OCI-LY7 (cell line): ENCODE measurements at regions of chr3 and their contacts with region 1.

Region 1: GRCh38 chr3:101809178-101810021 is 30.4 kb downstream of the NXPE3 start:
- DNase-seq: peak; percentile 65
- H3K4me3 ChIP-seq: no peak overlapping the region
- H3K27ac ChIP-seq: no peak overlapping the region
- H3K4me1 ChIP-seq: peaks cover 20% of the 10 kb centered on the region
- CTCF ChIP-seq: peak; percentile 94

Region 2: GRCh38 chr3:101665851-101666250 is 143.5 kb before region 1 on chr3:
- CTCF ChIA-PET with region 1: no interaction called
- POLR2A ChIA-PET with region 1: no interaction called
- intact Hi-C with region 1: no loop called
- DNase-seq: no peak
- H3K4me3 ChIP-seq: no peak overlapping the region
- H3K27ac ChIP-seq: no peak overlapping the region
- H3K4me1 ChIP-seq: no peaks in the 10 kb centered on the region
- CTCF ChIP-seq: no peak

Region 3: DNA sequence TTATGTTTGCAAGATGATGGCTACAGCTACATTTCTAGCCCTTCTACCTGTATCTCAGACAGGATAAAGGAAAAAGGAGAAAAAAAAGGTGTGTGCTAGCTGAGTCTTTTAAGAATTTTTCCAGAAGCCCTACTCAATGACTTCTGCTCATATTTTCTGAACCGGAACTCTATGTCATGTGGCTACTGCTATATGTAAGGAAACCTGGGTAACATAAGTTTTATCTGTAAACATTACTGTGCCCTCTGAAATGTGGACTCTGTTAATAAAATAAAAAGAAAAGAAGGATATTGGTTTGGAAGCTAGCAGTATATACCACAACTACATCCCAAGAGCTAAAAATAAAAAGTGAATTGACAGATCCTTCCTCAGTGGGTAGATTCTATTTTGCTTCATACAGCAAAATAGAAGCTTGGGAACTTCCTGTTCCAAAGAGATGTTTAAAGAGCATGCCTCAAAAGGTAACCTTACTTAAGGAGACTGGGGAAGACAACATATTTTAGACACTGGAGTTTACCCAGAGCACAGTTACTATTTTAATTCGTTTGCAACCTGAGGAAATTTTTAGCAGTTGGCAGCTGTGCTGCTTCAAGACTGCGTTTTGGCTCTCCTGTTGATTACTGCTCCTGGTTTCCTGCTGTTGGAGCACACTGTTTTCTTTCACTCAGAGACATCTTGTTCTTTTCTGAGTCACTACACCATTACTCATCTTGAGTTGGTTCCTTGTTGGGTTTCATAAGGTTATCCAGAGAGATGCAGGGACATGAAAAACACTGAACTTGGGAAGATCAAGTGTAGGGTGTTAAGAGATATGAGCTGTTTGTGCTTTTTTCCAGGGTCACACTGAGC is 320.6 kb after region 1 on chr3:
- CTCF ChIA-PET with region 1: no interaction called
- POLR2A ChIA-PET with region 1: no interaction called
- intact Hi-C with region 1: loop called (anchors 10 kb)
- DNase-seq: no peak
- H3K4me3 ChIP-seq: no peak overlapping the region
- H3K27ac ChIP-seq: no peak overlapping the region
- H3K4me1 ChIP-seq: no peaks in the 10 kb centered on the region
- CTCF ChIP-seq: no peak

Region 4: GRCh38 chr3:102536456-102536855 is 727.1 kb after region 1 on chr3:
- CTCF ChIA-PET with region 1: no interaction called
- POLR2A ChIA-PET with region 1: interaction called, 3 read pairs
- intact Hi-C with region 1: loop called (anchors 2 kb)
- DNase-seq: peak; percentile 58
- H3K4me3 ChIP-seq: no peak overlapping the region
- H3K27ac ChIP-seq: no peak overlapping the region
- H3K4me1 ChIP-seq: peaks cover 8% of the 10 kb centered on the region
- CTCF ChIP-seq: peak; percentile 83